B cell (primary cell): ENCODE measurements at regions of chr2 and their contacts with region 1.

Region 1: DNA sequence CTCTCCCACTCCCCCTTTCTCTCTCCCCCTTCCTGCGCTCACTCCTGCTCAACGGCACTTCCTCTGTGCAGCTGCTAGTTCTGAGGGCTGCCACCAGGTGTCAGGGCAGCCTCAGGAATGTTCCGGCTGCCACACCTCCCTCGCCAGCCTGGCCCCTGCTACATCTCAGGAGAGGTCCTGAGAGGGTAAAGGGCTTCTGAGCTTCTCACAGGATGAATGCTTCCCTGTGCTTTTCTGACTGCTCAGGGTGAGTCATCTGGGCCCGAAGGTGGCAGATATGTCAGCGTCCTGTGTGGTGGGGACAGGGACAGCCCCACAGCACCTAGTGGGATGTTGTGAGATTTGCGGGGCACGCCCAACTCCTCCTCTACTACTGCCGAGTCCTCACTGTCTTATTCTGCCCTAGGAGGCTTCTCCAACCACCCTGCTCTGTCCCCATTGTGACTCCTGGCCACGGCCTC is 49.0 kb downstream of the PLEKHB2 start:
- DNase-seq: peak; percentile 74
- ATAC-seq: peak; percentile 91
- H3K4me3 ChIP-seq: no peak overlapping the region
- H3K4me3 Mint-ChIP-seq: peak overlapping the region; percentile 10
- H3K27ac ChIP-seq: no peak overlapping the region
- H3K27ac Mint-ChIP-seq: no peak overlapping the region
- H3K4me1 ChIP-seq: peaks cover 9 to 15% of the 10 kb centered on the region in 2 donors
- H3K4me1 Mint-ChIP-seq: peaks cover 19% of the 10 kb centered on the region
- H3K27me3 ChIP-seq: no peaks in the 10 kb centered on the region
- H3K27me3 Mint-ChIP-seq: no peaks in the 10 kb centered on the region
- CTCF ChIP-seq: peak; percentile 76

Region 2: DNA sequence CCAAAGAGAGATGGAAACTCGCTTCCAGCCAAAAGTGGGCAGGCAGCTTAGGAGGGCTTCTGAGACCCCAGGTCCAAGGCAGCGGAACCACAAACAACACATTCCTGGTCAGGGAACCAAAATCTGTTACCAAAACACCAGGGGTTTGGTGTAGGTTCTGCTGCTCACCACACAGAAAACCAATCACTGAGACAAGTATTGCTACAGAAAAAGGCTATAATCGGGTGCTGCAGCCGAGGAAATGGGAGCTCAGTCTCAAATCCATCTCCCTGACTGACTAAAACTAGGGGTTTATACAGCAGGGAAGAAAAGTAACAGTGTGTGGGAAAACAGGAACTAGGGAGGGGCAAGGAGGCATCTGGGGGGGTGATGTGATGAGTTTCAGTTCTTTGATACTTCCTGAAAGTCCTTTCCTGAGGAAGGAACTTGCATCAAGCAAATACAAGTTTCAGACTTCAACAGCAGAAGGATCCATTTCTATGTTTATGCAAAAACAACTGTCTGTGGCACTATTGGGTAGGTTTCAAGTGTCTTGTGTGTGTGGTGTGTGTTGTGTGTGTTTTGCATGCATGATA is 168.8 kb before region 1 on chr2:
- CTCF ChIA-PET with region 1: no interaction called
- POLR2A ChIA-PET with region 1: no interaction called
- intact Hi-C with region 1: no loop called
- DNase-seq: no peak
- ATAC-seq: no peak
- H3K4me3 ChIP-seq: no peak overlapping the region
- H3K4me3 Mint-ChIP-seq: peak overlapping the region; percentile 44
- H3K27ac ChIP-seq: no peak overlapping the region
- H3K27ac Mint-ChIP-seq: peak overlapping the region; percentile 5
- H3K4me1 ChIP-seq: peaks cover 7 to 13% of the 10 kb centered on the region in 2 donors
- H3K4me1 Mint-ChIP-seq: peaks cover 14% of the 10 kb centered on the region
- H3K27me3 ChIP-seq: no peaks in the 10 kb centered on the region
- H3K27me3 Mint-ChIP-seq: no peaks in the 10 kb centered on the region
- CTCF ChIP-seq: no peak

Region 3: DNA sequence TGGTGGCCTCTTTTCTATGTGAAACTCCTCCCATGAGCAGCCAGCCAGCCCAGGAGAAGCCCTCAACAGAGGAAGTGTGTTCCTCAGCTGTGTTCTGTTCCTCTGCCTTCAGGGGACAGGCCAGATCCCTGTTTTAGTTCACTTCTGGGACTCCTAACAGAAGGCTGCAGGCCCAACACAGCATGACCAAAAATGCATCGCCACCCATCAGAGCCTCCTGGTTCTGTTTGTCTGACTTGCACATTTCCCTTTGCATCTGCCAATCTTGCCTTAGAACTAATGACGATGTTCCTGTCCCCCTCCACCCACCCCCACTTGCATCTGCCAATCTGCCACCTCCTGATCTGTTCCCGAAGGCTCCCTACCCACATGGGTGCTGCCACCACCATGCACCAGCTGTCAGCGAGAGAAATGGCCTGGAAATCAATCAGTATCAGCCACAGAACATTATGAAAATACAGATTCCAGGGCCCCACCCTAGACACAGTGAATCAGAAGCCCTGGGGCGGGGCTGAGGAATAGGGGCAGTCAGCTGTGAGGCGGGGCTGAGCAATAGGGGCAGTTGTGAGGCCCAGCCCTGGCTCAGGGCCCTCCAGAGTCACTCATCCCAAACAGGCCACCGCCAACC is 111.8 kb before region 1 on chr2:
- CTCF ChIA-PET with region 1: no interaction called
- POLR2A ChIA-PET with region 1: no interaction called
- intact Hi-C with region 1: no loop called
- DNase-seq: no peak
- ATAC-seq: no peak
- H3K4me3 ChIP-seq: no peak overlapping the region
- H3K4me3 Mint-ChIP-seq: no peak overlapping the region
- H3K27ac ChIP-seq: no peak overlapping the region
- H3K27ac Mint-ChIP-seq: no peak overlapping the region
- H3K4me1 ChIP-seq: peaks cover 7 to 8% of the 10 kb centered on the region in 2 donors
- H3K4me1 Mint-ChIP-seq: peaks cover 10% of the 10 kb centered on the region
- H3K27me3 ChIP-seq: peaks cover 0 to 21% (median 0%) of the 10 kb centered on the region in 4 experiments
- H3K27me3 Mint-ChIP-seq: peaks cover 16% of the 10 kb centered on the region
- CTCF ChIP-seq: no peak

Region 4: DNA sequence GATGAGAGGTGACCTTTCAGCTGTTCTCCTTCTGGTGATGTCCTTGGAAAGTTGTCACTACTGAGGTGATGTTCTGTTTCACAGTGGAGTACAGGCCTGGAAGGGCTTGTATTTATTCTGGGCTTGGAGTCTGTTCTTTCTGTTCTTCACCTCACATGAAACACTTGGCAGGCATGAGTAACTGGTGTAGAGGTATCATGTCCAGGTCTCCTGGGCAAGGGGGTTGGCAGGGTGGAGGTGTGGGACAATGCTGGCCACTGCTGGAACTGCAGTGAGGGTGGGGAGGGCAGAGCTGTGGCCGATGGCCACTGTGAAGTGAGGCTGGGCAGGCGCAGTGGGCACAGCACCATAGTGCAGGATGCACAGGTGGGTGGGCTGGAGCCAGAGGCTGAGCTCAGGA is 13.5 kb before region 1 on chr2:
- CTCF ChIA-PET with region 1: interaction called, 15 read pairs
- POLR2A ChIA-PET with region 1: no interaction called
- intact Hi-C with region 1: no loop called
- DNase-seq: no peak
- ATAC-seq: no peak
- H3K4me3 ChIP-seq: no peak overlapping the region
- H3K4me3 Mint-ChIP-seq: no peak overlapping the region
- H3K27ac ChIP-seq: no peak overlapping the region
- H3K27ac Mint-ChIP-seq: no peak overlapping the region
- H3K4me1 ChIP-seq: peaks cover 3 to 10% of the 10 kb centered on the region in 2 donors
- H3K4me1 Mint-ChIP-seq: peaks cover 12% of the 10 kb centered on the region
- H3K27me3 ChIP-seq: no peaks in the 10 kb centered on the region
- H3K27me3 Mint-ChIP-seq: no peaks in the 10 kb centered on the region
- CTCF ChIP-seq: no peak

Region 5: DNA sequence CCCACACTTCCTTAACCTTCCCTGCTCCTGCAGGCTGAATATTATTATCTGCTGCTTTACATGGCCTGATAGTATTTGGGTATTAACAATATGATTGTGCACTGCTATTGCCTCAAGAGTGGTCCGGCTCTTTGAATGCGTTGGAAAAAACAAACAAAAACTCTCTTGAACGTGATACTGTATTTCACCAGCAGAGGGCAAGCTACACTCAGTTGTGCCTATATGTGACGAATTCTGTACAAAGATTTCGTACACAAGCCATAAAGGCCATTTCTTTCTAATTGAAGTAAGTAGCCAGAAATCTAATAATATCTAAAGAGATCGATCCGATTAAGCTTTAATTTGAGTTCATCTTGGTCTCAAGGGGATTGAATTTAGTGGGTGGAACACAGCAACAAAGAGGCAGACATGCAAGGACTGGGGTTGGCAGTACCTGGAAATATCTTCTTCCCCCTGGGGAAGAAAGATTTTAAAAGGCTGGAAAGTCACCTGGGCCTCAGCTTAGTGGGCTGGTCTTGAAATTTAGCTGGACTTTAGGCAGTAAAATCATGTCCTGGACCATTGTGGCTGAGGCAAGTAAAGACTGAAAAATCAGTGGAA is 259.1 kb after region 1 on chr2:
- CTCF ChIA-PET with region 1: interaction called, 8 read pairs
- POLR2A ChIA-PET with region 1: no interaction called
- intact Hi-C with region 1: loop called (anchors 1 kb)
- DNase-seq: peak; percentile 64
- ATAC-seq: peak; percentile 61
- H3K4me3 ChIP-seq: no peak overlapping the region
- H3K4me3 Mint-ChIP-seq: no peak overlapping the region
- H3K27ac ChIP-seq: no peak overlapping the region
- H3K27ac Mint-ChIP-seq: no peak overlapping the region
- H3K4me1 ChIP-seq: no peaks in the 10 kb centered on the region
- H3K4me1 Mint-ChIP-seq: no peaks in the 10 kb centered on the region
- H3K27me3 ChIP-seq: peaks cover 0 to 13% (median 4%) of the 10 kb centered on the region in 4 experiments
- H3K27me3 Mint-ChIP-seq: peaks cover 38% of the 10 kb centered on the region
- CTCF ChIP-seq: peak; percentile 96

Region 6: DNA sequence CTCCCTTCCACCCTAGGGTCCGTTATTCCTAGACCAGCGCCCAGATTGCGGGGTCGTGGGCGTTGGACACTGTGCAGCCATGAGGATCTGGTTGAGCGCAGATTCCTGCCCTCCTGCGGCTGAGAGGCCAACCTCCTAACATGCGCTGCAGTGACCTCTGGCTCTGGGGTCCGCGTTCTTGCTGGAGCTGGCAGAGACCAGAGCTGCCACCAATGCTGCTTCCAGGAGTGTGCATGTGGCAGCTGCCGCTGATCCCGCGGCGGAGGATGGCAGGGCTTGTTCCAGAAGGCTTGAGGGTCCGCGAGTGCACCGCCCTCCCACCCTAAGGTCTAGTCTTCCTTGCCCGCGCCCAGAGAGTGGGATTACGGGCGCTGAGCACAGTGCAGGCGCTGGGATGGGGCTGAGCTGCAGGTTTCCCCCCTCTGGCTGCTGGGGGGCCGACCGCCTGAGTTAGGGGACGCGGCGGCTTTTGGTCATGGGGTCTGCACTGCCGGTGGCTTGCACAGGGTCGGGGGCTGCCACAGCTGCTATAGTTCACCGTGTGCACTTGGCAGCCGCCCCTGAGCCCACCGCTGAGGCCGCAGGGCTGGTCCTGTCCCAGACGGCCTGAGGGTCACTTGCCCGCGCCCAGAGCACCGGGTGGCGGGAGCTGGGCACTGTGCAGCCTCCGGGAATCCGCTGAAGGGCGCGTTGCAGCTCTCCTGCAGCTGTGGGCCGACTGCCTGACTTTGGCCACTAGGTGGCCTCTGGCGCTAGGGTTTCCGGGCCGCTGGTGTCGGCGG is 519.5 kb after region 1 on chr2:
- CTCF ChIA-PET with region 1: interaction called, 15 read pairs
- POLR2A ChIA-PET with region 1: no interaction called
- intact Hi-C with region 1: no loop called
- DNase-seq: peak; percentile 71
- ATAC-seq: peak; percentile 67
- H3K4me3 ChIP-seq: peak overlapping the region in 3 of 5 experiments; percentile 30 to 63 (median 48)
- H3K4me3 Mint-ChIP-seq: peak overlapping the region; percentile 73
- H3K27ac ChIP-seq: no peak overlapping the region
- H3K27ac Mint-ChIP-seq: no peak overlapping the region
- H3K4me1 ChIP-seq: peaks cover 20 to 24% of the 10 kb centered on the region in 2 donors
- H3K4me1 Mint-ChIP-seq: peaks cover 20% of the 10 kb centered on the region
- H3K27me3 ChIP-seq: peaks cover 0 to 33% (median 20%) of the 10 kb centered on the region in 4 experiments
- H3K27me3 Mint-ChIP-seq: peaks cover 16% of the 10 kb centered on the region
- CTCF ChIP-seq: peak; percentile 86

Region 7: DNA sequence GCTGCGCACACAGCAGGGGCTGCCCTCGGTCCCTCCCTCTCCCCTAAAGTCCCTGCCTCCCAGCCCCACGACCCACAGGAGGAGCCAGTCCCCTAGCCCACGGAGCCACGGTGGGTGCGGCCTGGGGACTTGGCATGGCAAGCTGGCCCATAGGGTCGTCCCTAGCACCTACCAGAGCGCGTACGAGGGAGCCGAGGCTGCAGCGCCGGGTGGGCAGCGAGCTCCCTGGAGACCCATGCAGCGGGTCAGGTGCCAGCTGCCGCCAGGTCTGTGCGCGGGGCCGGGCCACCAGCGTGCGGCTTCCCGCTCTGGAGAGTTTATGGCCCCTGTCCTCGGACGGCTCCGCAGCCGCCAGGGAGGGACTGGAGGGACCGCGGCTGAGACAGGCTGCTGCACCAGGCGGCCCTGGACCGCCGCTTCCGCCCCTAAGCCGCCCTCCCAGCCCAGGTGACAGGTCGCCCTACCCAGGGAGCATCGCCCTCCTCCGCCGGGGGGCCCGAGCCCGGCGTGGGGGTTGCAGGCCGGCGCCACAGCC is 647.2 kb after region 1 on chr2:
- CTCF ChIA-PET with region 1: interaction called, 10 read pairs
- POLR2A ChIA-PET with region 1: no interaction called
- intact Hi-C with region 1: no loop called
- DNase-seq: peak; percentile 14
- ATAC-seq: no peak
- H3K4me3 ChIP-seq: no peak overlapping the region
- H3K4me3 Mint-ChIP-seq: no peak overlapping the region
- H3K27ac ChIP-seq: no peak overlapping the region
- H3K27ac Mint-ChIP-seq: no peak overlapping the region
- H3K4me1 ChIP-seq: peaks cover 0 to 9% of the 10 kb centered on the region in 2 donors
- H3K4me1 Mint-ChIP-seq: peaks cover 3% of the 10 kb centered on the region
- H3K27me3 ChIP-seq: peaks cover 0 to 4% (median 0%) of the 10 kb centered on the region in 4 experiments
- H3K27me3 Mint-ChIP-seq: peaks cover 8% of the 10 kb centered on the region
- CTCF ChIP-seq: no peak